Cardiac septum (tissue), 1 donor: ENCODE measurements at regions of chr3 and their contacts with region 1.

Region 1: GRCh38 chr3:57227204-57227929 is at the start of gene APPL1:
- DNase-seq: peak; percentile 98
- total RNA-seq, gene APPL1: 48.6 TPM

Region 2: GRCh38 chr3:56997675-56998074 is 229.7 kb before region 1 on chr3:
- intact Hi-C with region 1: loop called (anchors 10 kb)
- DNase-seq: no peak

Region 3: GRCh38 chr3:57100046-57100695 is 127.2 kb before region 1 on chr3:
- intact Hi-C with region 1: loop called (anchors 5 kb)
- DNase-seq: no peak

Region 4: DNA sequence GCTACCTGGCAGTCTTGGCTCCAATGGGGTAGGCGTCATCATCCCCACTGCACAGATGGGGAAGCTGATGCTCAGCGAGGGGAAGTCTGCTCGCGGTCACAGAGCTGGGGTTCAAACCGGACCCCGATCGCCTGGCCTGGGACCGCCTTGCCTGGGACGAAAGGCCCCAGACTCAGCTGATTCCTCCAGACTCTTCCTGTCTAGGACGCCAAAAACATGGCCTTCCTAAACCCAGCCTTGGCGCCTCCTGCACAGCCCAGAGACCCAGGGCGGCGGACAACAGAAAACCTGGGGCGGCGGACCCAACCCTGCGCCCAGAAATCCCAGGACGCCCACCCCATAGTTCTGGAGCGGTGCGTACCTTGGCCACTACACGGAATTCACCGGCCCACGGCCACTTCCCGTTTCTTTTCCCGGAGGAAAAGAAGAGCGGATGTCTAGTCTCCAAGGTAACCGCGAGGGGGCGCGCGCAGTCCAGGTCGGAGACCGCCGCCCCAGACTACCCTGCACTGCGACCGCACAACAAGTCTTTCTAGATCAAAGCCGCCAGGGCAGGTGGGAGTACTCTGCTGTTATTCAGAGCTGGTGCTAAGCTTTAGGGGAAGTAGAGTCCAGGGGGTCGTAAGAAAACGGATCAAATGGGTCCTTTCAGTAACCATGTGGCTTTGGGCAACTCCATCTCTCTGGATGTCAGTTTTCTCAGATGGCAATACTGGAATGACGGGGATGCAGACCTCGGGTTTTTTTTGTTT is 57.3 kb before region 1 on chr3:
- intact Hi-C with region 1: loop called (anchors 5 kb)
- DNase-seq: peak; percentile 89

Region 5: DNA sequence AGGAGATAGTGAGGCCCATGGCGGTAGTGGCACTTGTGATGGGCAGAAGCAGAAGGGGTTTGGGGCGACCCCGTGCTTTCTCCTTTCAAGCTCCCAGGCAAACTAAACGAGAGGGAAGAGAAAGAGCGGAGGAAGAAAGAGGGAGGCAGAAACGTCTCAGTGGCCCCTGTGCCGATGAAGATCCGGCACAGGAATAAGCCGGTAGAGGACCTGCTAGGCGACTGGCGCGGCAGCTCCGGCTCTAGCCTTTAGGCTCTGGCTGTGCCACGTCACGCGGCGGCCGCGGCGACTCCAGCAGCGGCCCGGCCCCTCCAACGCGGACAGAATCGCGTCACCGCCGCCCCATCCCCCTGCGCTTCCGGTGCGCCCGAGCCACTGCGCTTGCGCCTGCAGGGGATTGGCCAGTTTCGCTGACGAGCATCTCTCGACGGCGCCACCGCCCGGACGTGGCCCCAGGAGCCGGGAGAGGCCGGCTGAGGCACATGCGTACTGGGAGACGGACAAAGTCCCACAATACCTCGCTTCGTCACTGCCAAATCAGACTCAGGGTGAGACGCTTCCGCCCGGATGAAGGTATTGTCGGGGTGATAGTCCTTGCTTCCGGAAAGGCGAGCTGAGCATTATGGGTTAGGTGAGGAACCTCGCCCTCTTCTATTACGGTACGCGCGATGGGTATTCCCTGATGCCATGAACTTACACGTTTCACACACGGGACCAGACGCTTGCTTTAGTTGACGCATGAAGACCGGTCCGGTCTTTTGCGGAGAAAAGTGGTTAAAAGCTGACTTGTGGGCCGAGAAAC is 370.0 kb after region 1 on chr3 and contains the start of gene ARF4:
- intact Hi-C with region 1: loop called (anchors 5 kb)
- DNase-seq: peak; percentile 99
- total RNA-seq, gene ARF4: 103 TPM